MCF 10A (cell line): ENCODE measurements at regions of chr11 and their contacts with region 1.

Region 1: GRCh38 chr11:36450110-36450572 is 59.9 kb downstream of the TRAF6 start:
- DNase-seq: no peak
- H3K4me3 Mint-ChIP-seq: no peak overlapping the region
- H3K27ac Mint-ChIP-seq: peak overlapping the region; percentile 35
- H3K4me1 Mint-ChIP-seq: peaks cover 27% of the 10 kb centered on the region
- H3K27me3 Mint-ChIP-seq: no peaks in the 10 kb centered on the region
- CTCF ChIP-seq: no peak

Region 2: DNA sequence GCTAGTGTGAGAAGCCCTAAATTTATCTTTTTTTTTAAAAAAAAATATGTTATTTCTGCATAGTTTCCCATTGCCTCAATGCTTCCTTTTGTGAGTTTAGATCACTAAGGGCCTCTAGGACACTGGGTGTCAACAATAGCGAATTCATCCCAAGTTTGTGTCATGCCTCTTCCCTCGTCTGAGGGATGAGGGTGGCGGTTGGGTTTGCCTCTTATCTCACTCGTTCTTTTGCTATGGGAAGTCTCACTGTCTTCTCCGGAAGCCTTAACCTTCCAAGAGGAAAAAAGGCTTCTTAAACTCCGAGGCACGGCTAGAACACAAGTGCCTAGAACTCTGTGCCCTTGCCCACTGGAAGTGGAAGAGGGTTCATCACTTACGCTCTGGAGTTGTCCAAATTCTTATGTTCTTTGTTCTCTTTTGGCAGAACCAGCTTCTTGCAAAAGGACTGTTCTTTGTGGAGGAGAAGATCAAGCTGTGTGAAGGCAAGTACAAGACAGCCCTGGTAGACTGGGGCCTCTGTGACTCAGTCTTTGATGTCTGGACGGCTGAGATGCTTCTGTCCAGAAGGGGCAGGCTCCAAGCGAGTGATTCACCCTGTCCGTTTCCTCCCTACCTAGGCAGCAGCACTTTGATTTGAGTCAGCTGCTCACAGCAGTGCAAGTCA is 18.6 kb before region 1 on chr11:
- CTCF ChIA-PET with region 1: interaction called, 15 read pairs
- POLR2A ChIA-PET with region 1: no interaction called
- intact Hi-C with region 1: no loop called
- DNase-seq: peak; percentile 90
- H3K4me3 Mint-ChIP-seq: no peak overlapping the region
- H3K27ac Mint-ChIP-seq: peak overlapping the region; percentile 50
- H3K4me1 Mint-ChIP-seq: peaks cover 27% of the 10 kb centered on the region
- H3K27me3 Mint-ChIP-seq: no peaks in the 10 kb centered on the region
- CTCF ChIP-seq: no peak